CD14-positive monocyte (primary cell): ENCODE measurements at regions of chr15 and their contacts with region 1.

Region 1: DNA sequence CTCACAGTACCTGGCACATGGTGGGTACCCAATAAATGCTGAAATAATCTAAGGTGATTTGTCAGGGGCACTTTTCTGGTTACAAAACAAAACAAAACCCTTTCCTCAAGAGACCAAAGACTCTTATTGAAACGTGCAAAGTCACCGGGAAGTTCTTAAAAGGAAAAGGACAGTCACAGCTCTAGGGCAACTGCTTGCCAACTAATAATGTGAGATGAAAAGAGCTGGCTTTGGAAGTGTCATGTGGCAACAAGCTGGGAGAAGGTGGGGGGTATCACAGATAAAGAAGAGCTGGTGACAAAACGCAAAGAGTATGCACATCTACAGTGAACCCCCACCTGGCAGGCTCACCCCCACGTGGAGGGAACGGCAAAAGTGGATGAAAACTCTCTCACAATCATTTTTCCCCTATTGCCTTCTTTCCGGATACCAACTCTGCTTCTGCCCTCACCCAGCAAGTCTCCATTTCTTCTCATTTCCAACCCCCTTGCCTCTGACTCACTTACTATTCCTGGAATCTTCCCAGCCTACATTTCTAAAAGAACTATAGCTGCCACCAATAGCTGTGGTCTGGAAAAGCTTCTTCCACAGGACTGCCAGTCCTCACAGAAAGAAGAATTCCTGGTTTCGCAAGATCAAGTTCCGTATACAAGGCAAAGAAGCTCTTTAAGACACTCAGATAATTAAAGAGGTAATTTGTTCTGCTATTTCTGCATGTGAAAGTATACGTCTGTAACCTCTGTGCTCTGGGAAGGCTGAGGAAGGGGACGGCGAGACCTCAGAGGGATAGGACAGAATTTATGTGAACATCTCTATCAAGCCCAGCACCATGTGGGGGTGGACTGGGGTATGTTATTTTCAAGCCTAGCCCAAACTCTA is 21.8 kb upstream of the ANPEP start:
- DNase-seq: peak in 2 of 3 donors; percentile 71 to 84
- H3K4me3 ChIP-seq: peak overlapping the region in 1 of 3 experiments; percentile 45
- H3K4me3 Mint-ChIP-seq: peak overlapping the region; percentile 7 to 64
- H3K27ac ChIP-seq: peak overlapping the region; percentile 86 to 93
- H3K27ac Mint-ChIP-seq: peak overlapping the region; percentile 91 to 98 (median 96)
- H3K4me1 ChIP-seq: peaks cover 67 to 71% of the 10 kb centered on the region in 2 donors
- H3K4me1 Mint-ChIP-seq: peaks cover 70% of the 10 kb centered on the region
- H3K27me3 ChIP-seq: no peaks in the 10 kb centered on the region
- H3K27me3 Mint-ChIP-seq: peaks cover 0 to 2% (median 0%) of the 10 kb centered on the region in 3 donors
- CTCF ChIP-seq: no peak

Region 2: GRCh38 chr15:89673165-89673512 is 163.4 kb before region 1 on chr15:
- intact Hi-C with region 1: no loop called
- DNase-seq: no peak
- H3K4me3 ChIP-seq: no peak overlapping the region
- H3K4me3 Mint-ChIP-seq: no peak overlapping the region
- H3K27ac ChIP-seq: no peak overlapping the region
- H3K27ac Mint-ChIP-seq: no peak overlapping the region
- H3K4me1 ChIP-seq: no peaks in the 10 kb centered on the region
- H3K4me1 Mint-ChIP-seq: no peaks in the 10 kb centered on the region
- H3K27me3 ChIP-seq: no peaks in the 10 kb centered on the region
- H3K27me3 Mint-ChIP-seq: peaks cover 0 to 7% (median 2%) of the 10 kb centered on the region in 3 donors
- CTCF ChIP-seq: peak; percentile 47

Region 3: DNA sequence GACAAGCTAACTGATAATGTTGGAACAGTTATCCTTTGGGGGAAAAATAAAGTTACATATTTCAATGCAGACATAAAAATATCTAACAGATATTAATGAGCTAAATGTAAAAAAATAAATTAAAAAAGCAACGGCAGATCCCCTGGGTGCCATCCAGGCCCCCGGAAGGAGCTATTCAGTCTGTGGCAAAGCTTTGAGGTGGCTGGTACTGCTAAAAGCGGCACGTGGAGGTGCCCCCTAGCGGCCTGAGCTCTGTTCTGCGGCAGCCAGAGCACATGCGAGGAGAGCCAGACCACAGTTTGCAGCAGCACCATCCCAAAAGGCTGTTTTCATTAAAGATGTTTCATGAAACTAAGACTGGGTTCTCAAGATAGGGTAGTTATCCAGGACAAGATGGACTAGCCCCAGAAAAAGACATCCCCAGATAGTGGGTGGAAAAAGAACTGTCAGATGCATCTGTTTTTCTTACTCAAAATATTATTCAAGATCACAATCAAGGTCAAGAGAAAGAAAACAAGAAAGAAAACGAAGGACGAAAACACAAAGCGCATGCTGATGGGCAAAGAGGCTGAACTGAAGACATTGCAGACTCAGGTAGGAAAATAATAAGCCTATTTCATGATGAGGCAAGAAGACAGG is 38.6 kb after region 1 on chr15:
- intact Hi-C with region 1: loop called in 1 of 2 experiments (anchors 5 kb)
- DNase-seq: peak; percentile 77 to 86 (median 79)
- H3K4me3 ChIP-seq: no peak overlapping the region
- H3K4me3 Mint-ChIP-seq: no peak overlapping the region
- H3K27ac ChIP-seq: peak overlapping the region; percentile 88 to 91
- H3K27ac Mint-ChIP-seq: peak overlapping the region; percentile 90 to 98 (median 97)
- H3K4me1 ChIP-seq: peaks cover 50 to 55% of the 10 kb centered on the region in 2 donors
- H3K4me1 Mint-ChIP-seq: peaks cover 48% of the 10 kb centered on the region
- H3K27me3 ChIP-seq: no peaks in the 10 kb centered on the region
- H3K27me3 Mint-ChIP-seq: peaks cover 0 to 3% (median 0%) of the 10 kb centered on the region in 3 donors
- CTCF ChIP-seq: peak; percentile 95